Endothelial cell of umbilical vein (primary cell): ENCODE measurements at regions of chr1 and their contacts with region 1.

Region 1: GRCh38 chr1:86470859-86471258 is 2.1 kb downstream of the CLCA1 start:
- DNase-seq: no peak
- H3K4me3 ChIP-seq: no peak overlapping the region
- H3K27ac ChIP-seq: no peak overlapping the region
- H3K4me1 ChIP-seq: peaks cover 3% of the 10 kb centered on the region
- H3K27me3 ChIP-seq: peaks cover 2 to 3% of the 10 kb centered on the region in 2 experiments
- CTCF ChIP-seq: no peak
- POLR2A ChIP-seq: no peak

Region 2: GRCh38 chr1:86429835-86430234 is 41.0 kb before region 1 on chr1:
- CTCF ChIA-PET with region 1: no interaction called
- POLR2A ChIA-PET with region 1: no interaction called
- dilution Hi-C with region 1: no loop called
- intact Hi-C with region 1: loop called (anchors 5 kb)
- DNase-seq: peak; percentile 81
- H3K4me3 ChIP-seq: no peak overlapping the region
- H3K27ac ChIP-seq: peak overlapping the region; percentile 40
- H3K4me1 ChIP-seq: peaks cover 13% of the 10 kb centered on the region
- H3K27me3 ChIP-seq: peaks cover 0 to 3% of the 10 kb centered on the region in 2 experiments
- CTCF ChIP-seq: no peak
- POLR2A ChIP-seq: no peak

Region 3: GRCh38 chr1:86491171-86491950 is 20.5 kb after region 1 on chr1:
- CTCF ChIA-PET with region 1: interaction called, 16 read pairs
- POLR2A ChIA-PET with region 1: no interaction called
- dilution Hi-C with region 1: no loop called
- intact Hi-C with region 1: no loop called
- DNase-seq: no peak
- H3K4me3 ChIP-seq: no peak overlapping the region
- H3K27ac ChIP-seq: no peak overlapping the region
- H3K4me1 ChIP-seq: no peaks in the 10 kb centered on the region
- H3K27me3 ChIP-seq: peaks cover 10 to 20% of the 10 kb centered on the region in 2 experiments
- CTCF ChIP-seq: no peak
- POLR2A ChIP-seq: no peak

Region 4: GRCh38 chr1:86515597-86515996 is 44.7 kb after region 1 on chr1:
- CTCF ChIA-PET with region 1: no interaction called
- POLR2A ChIA-PET with region 1: no interaction called
- dilution Hi-C with region 1: no loop called
- intact Hi-C with region 1: no loop called
- DNase-seq: peak; percentile 67
- H3K4me3 ChIP-seq: no peak overlapping the region
- H3K27ac ChIP-seq: no peak overlapping the region
- H3K4me1 ChIP-seq: no peaks in the 10 kb centered on the region
- H3K27me3 ChIP-seq: no peaks in the 10 kb centered on the region
- CTCF ChIP-seq: peak; percentile 52 to 64
- POLR2A ChIP-seq: no peak

Region 5: GRCh38 chr1:86687595-86687994 is 216.7 kb after region 1 on chr1:
- CTCF ChIA-PET with region 1: interaction called, 8 read pairs
- POLR2A ChIA-PET with region 1: no interaction called
- dilution Hi-C with region 1: no loop called
- intact Hi-C with region 1: loop called (anchors 10 kb)
- DNase-seq: peak; percentile 42
- H3K4me3 ChIP-seq: no peak overlapping the region
- H3K27ac ChIP-seq: no peak overlapping the region
- H3K4me1 ChIP-seq: no peaks in the 10 kb centered on the region
- H3K27me3 ChIP-seq: no peaks in the 10 kb centered on the region
- CTCF ChIP-seq: no peak
- POLR2A ChIP-seq: no peak